HCT116 (cell line): ENCODE measurements at regions of chr10 and their contacts with region 1.

Region 1: DNA sequence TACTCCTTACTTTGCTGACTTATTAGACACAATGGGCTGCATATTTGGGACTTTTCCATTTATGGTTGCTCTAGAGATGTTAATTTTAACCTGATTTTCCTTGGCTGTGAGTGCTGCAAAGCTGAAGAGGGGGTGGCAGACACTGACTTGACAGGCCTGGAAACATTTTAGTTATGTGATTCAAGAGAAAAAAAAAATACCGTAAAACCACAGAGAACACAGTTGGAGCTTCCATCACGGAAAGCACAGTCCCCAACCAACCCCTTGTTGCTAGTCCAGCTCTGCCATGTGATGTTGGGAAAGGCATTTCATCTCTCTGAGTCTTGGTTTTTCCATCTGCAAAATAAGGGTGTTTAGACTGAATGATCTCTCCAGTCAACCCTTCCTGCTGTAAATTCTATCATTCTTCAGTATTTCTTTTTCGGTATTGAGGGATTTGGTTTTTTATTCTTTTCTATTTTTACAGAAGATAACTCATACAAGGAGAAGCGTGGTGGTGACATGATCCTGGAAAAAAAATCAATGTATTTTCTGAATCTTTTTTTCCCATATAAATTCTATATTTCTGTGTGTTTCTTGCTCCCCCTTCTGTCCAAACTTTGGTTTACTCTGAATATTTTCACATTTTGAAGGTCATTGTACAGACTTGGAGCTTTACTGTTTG is 246.1 kb downstream of the REEP3 start:
- DNase-seq: no peak
- ATAC-seq: peak; percentile 63; the same call in 1 of the 2 replicates
- H3K4me3 ChIP-seq: no peak overlapping the region
- H3K27ac ChIP-seq: no peak overlapping the region
- H3K4me1 ChIP-seq: no peaks in the 10 kb centered on the region
- H3K27me3 ChIP-seq: no peaks in the 10 kb centered on the region
- CTCF ChIP-seq: peak; percentile 37 to 68 (median 59)
- POLR2A ChIP-seq: no peak
- RAD21 ChIP-seq: peak; percentile 74

Region 2: DNA sequence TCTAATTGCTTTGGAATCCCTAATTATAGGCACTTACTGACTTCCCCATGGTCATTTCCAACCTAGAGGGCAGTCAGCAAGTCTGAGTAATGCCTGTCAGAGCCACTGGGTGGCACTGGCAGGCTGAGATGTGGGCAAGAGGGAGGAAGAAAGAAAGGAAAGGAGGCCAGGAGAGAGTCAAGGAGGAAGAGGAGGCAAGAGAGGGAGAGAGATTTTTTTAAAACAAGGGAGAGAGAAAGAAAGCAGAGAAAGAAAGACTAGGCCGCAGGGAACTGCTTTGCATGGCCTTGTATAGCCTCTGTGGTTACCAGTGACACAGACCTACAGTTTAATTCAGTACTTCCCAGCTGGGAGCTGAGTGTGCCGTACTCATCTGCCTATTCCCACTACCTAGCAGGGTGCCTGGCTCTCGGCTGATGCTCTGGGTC is 1173.2 kb before region 1 on chr10:
- CTCF ChIA-PET with region 1: no interaction called
- POLR2A ChIA-PET with region 1: no interaction called
- RAD21 ChIA-PET with region 1: no interaction called
- intact Hi-C with region 1: loop called (anchors 5 kb)
- DNase-seq: peak; percentile 53
- ATAC-seq: peak; percentile 97
- H3K4me3 ChIP-seq: no peak overlapping the region
- H3K27ac ChIP-seq: no peak overlapping the region
- H3K4me1 ChIP-seq: no peaks in the 10 kb centered on the region
- H3K27me3 ChIP-seq: no peaks in the 10 kb centered on the region
- CTCF ChIP-seq: peak; percentile 87 to 96 (median 89)
- POLR2A ChIP-seq: no peak
- RAD21 ChIP-seq: peak; percentile 92

Region 3: GRCh38 chr10:63166742-63167258 is 600.5 kb before region 1 on chr10:
- CTCF ChIA-PET with region 1: interaction called, 24 read pairs
- POLR2A ChIA-PET with region 1: no interaction called
- RAD21 ChIA-PET with region 1: interaction called in 1 of 2 experiments, 3 read pairs
- intact Hi-C with region 1: loop called (anchors 1 kb)
- DNase-seq: peak; percentile 64
- ATAC-seq: peak; percentile 86
- H3K4me3 ChIP-seq: no peak overlapping the region
- H3K27ac ChIP-seq: no peak overlapping the region
- H3K4me1 ChIP-seq: no peaks in the 10 kb centered on the region
- H3K27me3 ChIP-seq: no peaks in the 10 kb centered on the region
- CTCF ChIP-seq: peak; percentile 71 to 74 (median 74)
- POLR2A ChIP-seq: no peak
- RAD21 ChIP-seq: peak; percentile 79

Region 4: GRCh38 chr10:64350665-64351064 is 583.4 kb after region 1 on chr10:
- CTCF ChIA-PET with region 1: no interaction called
- POLR2A ChIA-PET with region 1: no interaction called
- RAD21 ChIA-PET with region 1: no interaction called
- intact Hi-C with region 1: no loop called
- DNase-seq: no peak
- ATAC-seq: no peak
- H3K4me3 ChIP-seq: no peak overlapping the region
- H3K27ac ChIP-seq: no peak overlapping the region
- H3K4me1 ChIP-seq: no peaks in the 10 kb centered on the region
- H3K27me3 ChIP-seq: no peaks in the 10 kb centered on the region
- CTCF ChIP-seq: no peak
- POLR2A ChIP-seq: no peak
- RAD21 ChIP-seq: no peak